Body of pancreas (tissue), 4 donors: ENCODE measurements at regions of chr13 and their contacts with region 1.

Region 1: GRCh38 chr13:41054212-41054877 is 7.0 kb upstream of the WBP4 start:
- DNase-seq: peak in 1 of 4 donors; percentile 44
- ATAC-seq: peak; percentile 39
- H3K4me3 ChIP-seq: no peak overlapping the region
- H3K27ac ChIP-seq: peak overlapping the region in 3 of 4 donors; percentile 26 to 44 (median 38)
- H3K4me1 ChIP-seq: peaks cover 92% of the 10 kb centered on the region
- H3K27me3 ChIP-seq: no peaks in the 10 kb centered on the region
- CTCF ChIP-seq: peak in 6 of 7 experiments; percentile 36 to 55 (median 43)
- POLR2A ChIP-seq: no peak

Region 2: GRCh38 chr13:40102856-40103255 is 951.5 kb before region 1 on chr13:
- intact Hi-C with region 1: no loop called
- DNase-seq: no peak
- ATAC-seq: no peak
- H3K4me3 ChIP-seq: no peak overlapping the region
- H3K27ac ChIP-seq: no peak overlapping the region
- H3K4me1 ChIP-seq: no peaks in the 10 kb centered on the region
- H3K27me3 ChIP-seq: no peaks in the 10 kb centered on the region
- CTCF ChIP-seq: no peak
- POLR2A ChIP-seq: no peak

Region 3: DNA sequence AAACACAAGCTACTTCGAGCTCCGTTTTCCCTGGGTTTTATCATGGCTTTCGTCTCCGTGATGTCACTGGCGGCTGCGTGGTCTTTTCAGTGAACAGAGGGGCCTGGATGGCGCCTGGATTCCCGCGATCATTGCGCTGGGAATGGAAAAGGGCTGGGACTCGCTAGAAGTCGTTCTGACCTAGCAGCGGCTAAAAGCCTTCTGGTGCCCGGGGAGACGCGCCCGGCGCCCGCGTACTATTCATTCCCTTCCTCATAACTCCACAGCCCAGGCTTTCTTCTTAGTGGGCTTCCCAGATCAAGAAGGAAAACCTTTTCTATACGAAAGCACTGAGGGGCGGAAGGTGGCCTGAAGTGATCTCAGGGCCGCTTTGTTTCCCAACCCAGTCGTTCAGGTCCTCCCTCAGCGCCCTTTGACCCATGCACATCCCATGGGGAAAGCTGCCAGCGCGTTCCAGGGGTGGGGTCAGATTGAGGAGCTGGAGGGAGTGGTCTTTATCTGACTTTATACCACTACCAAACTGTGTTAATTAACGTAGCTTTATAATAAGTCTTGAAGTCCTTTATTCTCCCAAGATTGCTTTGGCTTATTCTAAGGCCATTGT is 131.8 kb before region 1 on chr13:
- intact Hi-C with region 1: loop called (anchors 5 kb)
- DNase-seq: peak in 1 of 4 donors; percentile 24
- ATAC-seq: no peak
- H3K4me3 ChIP-seq: no peak overlapping the region
- H3K27ac ChIP-seq: no peak overlapping the region
- H3K4me1 ChIP-seq: peaks cover 9% of the 10 kb centered on the region
- H3K27me3 ChIP-seq: no peaks in the 10 kb centered on the region
- CTCF ChIP-seq: no peak
- POLR2A ChIP-seq: no peak

Region 4: DNA sequence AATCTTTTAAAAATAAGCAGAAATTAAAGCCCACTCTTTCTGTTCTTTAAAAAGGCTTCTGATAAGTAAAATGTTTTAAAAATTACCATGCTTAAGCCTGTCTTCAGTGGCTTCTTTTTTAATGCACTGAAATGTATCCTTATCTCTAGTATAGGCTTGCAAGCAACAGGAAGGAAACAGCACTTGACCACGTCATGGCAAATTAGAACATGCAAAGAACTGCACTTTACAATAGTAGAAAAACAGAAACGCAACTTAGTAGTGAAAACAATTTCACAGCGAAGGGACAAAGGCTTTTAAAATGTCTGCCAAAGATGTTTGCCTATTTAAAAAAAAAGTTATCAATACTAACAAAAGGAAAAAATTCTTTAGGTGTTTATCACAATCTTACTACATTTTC is 71.6 kb before region 1 on chr13:
- intact Hi-C with region 1: loop called (anchors 10 kb)
- DNase-seq: peak in 1 of 4 donors; percentile 67
- ATAC-seq: peak; percentile 34
- H3K4me3 ChIP-seq: no peak overlapping the region
- H3K27ac ChIP-seq: peak overlapping the region in 3 of 4 donors; percentile 73 to 85 (median 74)
- H3K4me1 ChIP-seq: peaks cover 82% of the 10 kb centered on the region
- H3K27me3 ChIP-seq: no peaks in the 10 kb centered on the region
- CTCF ChIP-seq: no peak
- POLR2A ChIP-seq: peak in 2 of 3 donors; percentile 33 to 62